Activated T-helper 2 cell treated with anti-CD3 and anti-CD28 coated beads, Interferon-gamma antibody, Interleukin-2, Interleukin-4, amounts not matched to agents 10 μg/mL and 5 μg/mL and 100 μg/mL, durations not matched to agents 14 hours and 24 hours and 36 hours (primary cell): ENCODE measurements at regions of chr17 and their contacts with region 1.

Region 1: DNA sequence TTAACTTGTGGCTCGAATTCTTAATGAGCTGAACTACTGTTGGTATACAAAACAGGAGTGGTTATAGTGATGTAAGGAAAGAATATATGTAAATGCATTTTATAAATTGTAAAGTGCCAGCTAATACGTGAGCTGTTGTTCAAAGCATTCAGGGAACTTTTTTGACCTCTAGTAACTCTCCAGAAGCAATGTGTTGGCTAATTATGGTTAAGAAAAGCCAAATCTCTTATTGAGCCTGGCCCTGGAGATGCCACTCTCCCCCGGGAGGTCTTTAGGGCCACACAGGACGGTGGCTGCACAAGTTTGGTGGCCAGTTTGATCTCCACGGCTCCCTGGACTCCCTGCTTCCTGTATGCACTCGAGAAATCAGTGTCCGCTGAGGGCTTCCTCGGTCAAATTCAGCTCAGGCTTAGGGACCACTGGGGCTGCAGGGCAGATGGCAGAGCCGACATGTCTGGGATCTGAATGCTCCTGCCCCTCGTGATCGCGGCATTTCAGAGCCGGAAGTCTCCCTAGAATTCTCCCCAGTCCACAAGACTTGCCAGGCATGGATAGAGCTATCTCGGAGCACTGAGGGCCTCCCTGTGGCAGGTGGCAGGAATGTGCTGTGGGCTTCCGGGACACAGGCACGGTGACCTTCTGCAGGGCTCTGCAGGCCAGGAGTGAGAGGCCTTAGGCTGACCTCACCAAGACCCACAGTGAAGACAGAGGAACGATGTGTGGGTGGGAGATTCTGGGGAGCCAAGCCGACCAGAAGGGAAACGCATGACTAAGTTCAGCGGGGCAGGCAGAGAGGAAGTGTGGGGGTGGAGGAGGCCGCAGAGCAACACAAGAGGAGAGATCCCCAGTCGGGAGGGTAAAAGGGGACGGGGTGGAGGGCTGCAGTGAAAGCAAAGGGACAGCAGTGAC is 18.6 kb upstream of the PITPNM3 start:
- DNase-seq: no peak
- H3K4me3 Mint-ChIP-seq: peak overlapping the region; percentile 15
- H3K27ac Mint-ChIP-seq: peak overlapping the region; percentile 18
- H3K4me1 Mint-ChIP-seq: peaks cover 20% of the 10 kb centered on the region
- H3K27me3 Mint-ChIP-seq: no peaks in the 10 kb centered on the region

Region 2: GRCh38 chr17:6660805-6661463 is 86.0 kb after region 1 on chr17:
- intact Hi-C with region 1: loop called (anchors 5 kb)
- DNase-seq: no peak
- H3K4me3 Mint-ChIP-seq: peak overlapping the region; percentile 2
- H3K27ac Mint-ChIP-seq: no peak overlapping the region
- H3K4me1 Mint-ChIP-seq: peaks cover 29% of the 10 kb centered on the region
- H3K27me3 Mint-ChIP-seq: peaks cover 36% of the 10 kb centered on the region